Activated CD4-positive, alpha-beta T cell treated with anti-CD3 and anti-CD28 coated beads for 36 hours (primary cell): ENCODE measurements at regions of chr10 and their contacts with region 1.

Region 1: DNA sequence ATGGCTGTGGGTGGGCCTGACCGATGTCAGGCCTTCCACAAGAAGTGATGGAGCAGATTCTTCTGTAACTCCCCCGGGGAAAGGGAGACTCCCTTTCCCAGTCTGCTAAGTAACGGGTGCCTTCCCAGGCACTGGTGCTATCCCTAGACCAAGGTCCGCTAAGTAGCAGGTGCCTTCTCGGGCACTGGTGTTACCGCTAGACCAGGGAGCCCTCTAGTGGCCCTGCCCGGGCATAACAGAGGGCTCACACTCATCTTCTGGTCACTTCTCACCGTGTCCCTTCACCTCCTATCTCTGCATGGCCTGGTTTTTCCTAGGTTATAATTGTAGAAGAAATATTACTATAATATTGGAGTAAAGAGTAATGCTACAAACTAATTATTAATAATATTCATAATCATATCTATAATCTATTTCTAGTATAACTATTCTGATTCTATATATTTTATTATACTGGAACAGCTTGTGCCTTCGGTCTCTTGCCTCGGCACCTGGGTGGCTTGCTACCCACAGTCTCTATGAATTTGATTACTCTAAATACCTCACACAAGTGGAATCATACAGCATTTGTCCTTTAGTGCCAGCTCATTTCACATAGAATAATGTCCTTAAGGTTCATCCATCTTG is 1378.7 kb downstream of the XPNPEP1 start:
- DNase-seq: peak; percentile 67
- ATAC-seq: peak; percentile 42
- H3K4me3 Mint-ChIP-seq: no peak overlapping the region
- H3K27ac Mint-ChIP-seq: no peak overlapping the region
- H3K4me1 Mint-ChIP-seq: no peaks in the 10 kb centered on the region
- H3K27me3 Mint-ChIP-seq: no peaks in the 10 kb centered on the region

Region 2: GRCh38 chr10:106625751-106626150 is 1918.9 kb before region 1 on chr10:
- CTCF ChIA-PET with region 1: no interaction called
- POLR2A ChIA-PET with region 1: no interaction called
- intact Hi-C with region 1: loop called in 1 of 2 experiments (anchors 1 kb)
- DNase-seq: no peak
- ATAC-seq: no peak
- H3K4me3 Mint-ChIP-seq: no peak overlapping the region
- H3K27ac Mint-ChIP-seq: no peak overlapping the region
- H3K4me1 Mint-ChIP-seq: no peaks in the 10 kb centered on the region
- H3K27me3 Mint-ChIP-seq: peaks cover 3% of the 10 kb centered on the region

Region 3: DNA sequence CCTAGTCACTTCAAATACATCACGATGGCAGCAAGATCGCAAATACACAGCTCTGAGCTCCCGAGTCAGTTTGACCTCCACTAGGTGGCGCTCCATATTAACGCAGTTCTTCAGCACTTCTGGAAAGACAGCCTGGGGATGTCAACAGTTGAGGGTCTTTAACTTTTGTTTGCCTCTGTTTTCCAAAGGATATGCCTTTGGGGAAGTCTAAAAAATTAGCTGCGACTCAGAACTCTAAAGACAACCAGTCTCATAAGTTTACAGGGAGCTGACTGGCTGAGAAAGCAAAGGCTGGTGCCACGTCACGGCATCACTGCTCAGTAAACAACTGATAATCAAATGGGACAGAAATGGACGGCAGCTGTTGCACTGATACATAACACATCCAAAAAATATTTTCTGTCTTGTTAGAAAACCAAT is 1838.9 kb before region 1 on chr10:
- CTCF ChIA-PET with region 1: no interaction called
- POLR2A ChIA-PET with region 1: no interaction called
- intact Hi-C with region 1: loop called (anchors 2 to 10 kb)
- DNase-seq: peak; percentile 63
- ATAC-seq: peak; percentile 33
- H3K4me3 Mint-ChIP-seq: no peak overlapping the region
- H3K27ac Mint-ChIP-seq: no peak overlapping the region
- H3K4me1 Mint-ChIP-seq: no peaks in the 10 kb centered on the region
- H3K27me3 Mint-ChIP-seq: peaks cover 4% of the 10 kb centered on the region

Region 4: DNA sequence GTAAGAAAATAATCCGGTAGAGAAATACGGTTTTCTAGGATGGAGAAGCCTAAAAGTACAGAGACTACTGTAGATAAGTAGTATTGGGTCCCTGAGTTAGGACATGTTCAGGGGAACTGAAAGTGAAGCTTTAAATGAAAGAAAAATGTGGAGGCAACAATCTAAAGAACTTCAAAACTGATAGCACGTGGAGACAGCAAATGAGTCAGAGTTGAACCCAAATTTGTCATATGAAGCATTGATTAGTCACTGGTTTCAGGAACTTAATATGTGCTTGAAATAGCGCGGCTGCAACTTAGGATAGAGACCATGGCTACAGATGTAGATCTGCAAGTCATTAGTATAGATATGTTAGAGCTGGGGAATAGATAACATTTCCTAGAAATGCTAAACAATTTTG is 241.5 kb before region 1 on chr10:
- CTCF ChIA-PET with region 1: no interaction called
- POLR2A ChIA-PET with region 1: no interaction called
- intact Hi-C with region 1: no loop called
- DNase-seq: no peak
- ATAC-seq: no peak
- H3K4me3 Mint-ChIP-seq: no peak overlapping the region
- H3K27ac Mint-ChIP-seq: no peak overlapping the region
- H3K4me1 Mint-ChIP-seq: peaks cover 2% of the 10 kb centered on the region
- H3K27me3 Mint-ChIP-seq: no peaks in the 10 kb centered on the region

Region 5: DNA sequence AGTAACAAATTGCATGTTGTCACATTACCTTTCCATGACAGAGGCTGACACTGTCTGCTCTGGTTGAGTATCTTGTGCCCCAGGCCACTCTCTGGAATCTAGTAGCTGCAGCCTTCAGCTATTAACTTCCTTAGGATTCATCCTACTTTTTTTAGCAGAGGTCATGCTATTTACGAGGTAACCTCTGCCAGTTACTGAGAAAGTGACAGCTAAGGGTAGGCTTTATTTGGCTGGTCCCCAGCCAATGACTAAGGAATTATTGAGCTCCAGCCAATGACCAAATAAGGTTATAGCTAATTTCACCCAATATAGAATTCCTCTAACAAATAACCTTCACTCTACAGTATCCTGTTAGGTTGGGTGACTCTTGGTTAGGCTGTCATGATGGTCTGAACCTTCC is 17.0 kb after region 1 on chr10:
- CTCF ChIA-PET with region 1: no interaction called
- POLR2A ChIA-PET with region 1: no interaction called
- intact Hi-C with region 1: no loop called
- DNase-seq: no peak
- ATAC-seq: no peak
- H3K4me3 Mint-ChIP-seq: no peak overlapping the region
- H3K27ac Mint-ChIP-seq: no peak overlapping the region
- H3K4me1 Mint-ChIP-seq: no peaks in the 10 kb centered on the region
- H3K27me3 Mint-ChIP-seq: no peaks in the 10 kb centered on the region